OCI-LY7 (cell line): ENCODE measurements at regions of chr5 and their contacts with region 1.

Region 1: GRCh38 chr5:50962934-50963872 is 296.8 kb downstream of the PARP8 start:
- DNase-seq: peak; percentile 77
- H3K4me3 ChIP-seq: peak overlapping the region; percentile 77
- H3K27ac ChIP-seq: no peak overlapping the region
- H3K4me1 ChIP-seq: no peaks in the 10 kb centered on the region
- CTCF ChIP-seq: peak; percentile 97

Region 2: GRCh38 chr5:51227963-51228362 is 264.8 kb after region 1 on chr5:
- CTCF ChIA-PET with region 1: no interaction called
- POLR2A ChIA-PET with region 1: no interaction called
- intact Hi-C with region 1: no loop called
- DNase-seq: no peak
- H3K4me3 ChIP-seq: no peak overlapping the region
- H3K27ac ChIP-seq: no peak overlapping the region
- H3K4me1 ChIP-seq: no peaks in the 10 kb centered on the region
- CTCF ChIP-seq: no peak

Region 3: DNA sequence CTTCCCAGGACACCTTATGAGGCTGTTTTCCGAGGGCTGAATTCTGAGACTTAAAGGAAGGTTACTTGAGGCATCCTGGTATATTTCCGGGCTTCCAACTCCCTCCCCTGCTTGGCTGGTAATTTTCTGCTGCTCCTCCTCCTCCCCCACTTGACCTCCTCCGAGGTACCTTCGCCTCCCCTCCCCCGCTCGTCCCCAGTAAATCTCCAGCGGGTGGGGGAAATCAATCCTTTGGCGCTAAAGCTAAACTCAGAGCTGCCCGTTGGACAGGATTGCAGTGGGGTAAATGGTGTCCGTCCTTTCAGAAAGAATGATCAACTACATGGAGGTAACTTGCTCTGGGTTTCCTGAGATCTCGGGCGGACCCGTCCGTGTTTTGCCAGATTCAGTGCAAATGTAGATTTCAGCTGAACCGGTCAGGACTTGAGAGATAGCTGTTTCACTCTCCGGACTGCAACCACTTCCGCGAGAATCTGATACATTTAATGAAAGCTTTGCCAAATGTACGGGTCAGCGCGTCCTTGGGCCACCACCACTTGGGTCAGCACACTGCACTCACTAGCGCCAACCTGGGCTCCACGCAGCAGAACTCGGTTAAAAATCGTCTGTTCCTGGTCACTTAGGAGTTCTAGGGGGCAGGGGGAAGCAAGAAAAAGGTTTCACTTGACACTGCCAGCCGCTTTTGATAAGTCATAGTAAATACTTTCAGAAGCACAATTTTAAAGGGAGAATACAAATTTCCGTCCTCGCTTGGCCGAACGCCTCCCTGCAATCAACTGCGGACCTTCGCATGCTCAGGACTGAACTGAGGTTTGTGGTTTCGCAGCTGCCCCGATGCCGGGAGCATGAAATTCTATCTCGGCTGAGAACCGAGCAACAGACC is 415.5 kb after region 1 on chr5:
- CTCF ChIA-PET with region 1: no interaction called
- POLR2A ChIA-PET with region 1: no interaction called
- intact Hi-C with region 1: loop called (anchors 10 kb)
- DNase-seq: no peak
- H3K4me3 ChIP-seq: no peak overlapping the region
- H3K27ac ChIP-seq: no peak overlapping the region
- H3K4me1 ChIP-seq: no peaks in the 10 kb centered on the region
- CTCF ChIP-seq: no peak

Region 4: DNA sequence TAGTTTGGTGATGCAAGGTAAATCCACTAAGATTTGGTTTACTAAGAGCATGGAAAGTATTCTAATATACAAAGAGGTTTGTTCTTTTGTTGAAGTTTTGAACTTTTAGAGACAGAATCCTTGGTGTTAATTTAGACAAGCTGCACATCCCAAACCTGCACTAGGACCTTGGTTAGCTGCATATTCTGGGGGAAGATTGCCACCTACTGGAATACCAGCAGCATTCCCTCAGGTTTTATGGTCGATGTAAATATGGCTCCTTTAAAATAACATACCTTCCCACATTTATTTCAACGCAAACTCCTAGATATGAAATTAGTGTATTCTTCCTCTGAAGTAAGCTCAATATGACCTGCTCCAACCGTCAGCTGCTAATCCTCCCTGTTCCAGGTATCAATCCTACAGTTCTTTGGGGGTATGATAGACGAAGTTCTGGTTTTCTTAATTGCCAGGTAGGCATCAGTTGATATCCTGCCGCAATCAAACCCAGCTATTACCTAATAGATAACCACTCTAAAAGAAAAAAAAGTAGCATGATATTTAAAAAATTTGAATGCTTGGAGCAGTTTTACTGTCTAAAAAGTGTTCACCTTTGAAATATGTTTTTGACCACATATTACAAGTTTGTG is 1044.1 kb after region 1 on chr5:
- CTCF ChIA-PET with region 1: no interaction called
- POLR2A ChIA-PET with region 1: no interaction called
- intact Hi-C with region 1: loop called (anchors 5 kb)
- DNase-seq: peak; percentile 38
- H3K4me3 ChIP-seq: no peak overlapping the region
- H3K27ac ChIP-seq: no peak overlapping the region
- H3K4me1 ChIP-seq: no peaks in the 10 kb centered on the region
- CTCF ChIP-seq: peak; percentile 75

Region 5: DNA sequence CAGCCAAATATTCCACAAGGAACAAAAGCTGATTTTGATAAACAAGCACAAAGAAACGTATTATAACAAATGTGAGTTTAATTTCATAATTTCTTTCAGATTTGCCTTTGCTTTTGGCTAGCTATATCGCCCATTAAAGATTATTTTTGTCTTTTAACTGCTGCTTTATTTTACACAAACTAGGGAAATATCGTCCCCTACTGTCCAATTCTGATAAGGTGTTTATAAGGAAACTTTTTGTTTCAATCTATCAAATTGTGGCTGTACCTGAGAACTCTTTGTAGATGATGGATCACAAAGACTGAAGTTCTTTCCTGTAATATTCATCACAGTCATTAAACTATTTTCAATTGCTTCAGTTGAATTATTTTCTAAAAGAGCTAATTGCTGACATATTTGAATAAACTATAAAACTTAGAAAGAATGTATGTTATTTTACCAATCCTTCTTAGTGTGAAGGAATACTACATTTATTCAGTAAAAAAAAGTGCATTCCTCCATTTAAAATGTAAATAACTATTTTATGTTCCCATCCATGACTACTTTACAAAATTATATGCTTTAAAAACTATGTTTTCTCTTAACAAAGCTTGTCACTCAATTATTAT is 1393.2 kb after region 1 on chr5:
- CTCF ChIA-PET with region 1: no interaction called
- POLR2A ChIA-PET with region 1: no interaction called
- intact Hi-C with region 1: loop called (anchors 5 kb)
- DNase-seq: peak; percentile 2
- H3K4me3 ChIP-seq: no peak overlapping the region
- H3K27ac ChIP-seq: no peak overlapping the region
- H3K4me1 ChIP-seq: no peaks in the 10 kb centered on the region
- CTCF ChIP-seq: peak; percentile 81